ENCODE measurements at regions of chr2 and their contacts with region 1.

Region 1: GRCh38 chr2:96868555-96869280 is 1.2 kb downstream of the SEMA4C start:
- DNase-seq: peak; percentile 92
- H3K4me3 ChIP-seq: peak overlapping the region; percentile 95
- H3K4me3 Mint-ChIP-seq: peak overlapping the region; percentile 78
- H3K27ac Mint-ChIP-seq: peak overlapping the region; percentile 75
- H3K4me1 ChIP-seq: peaks cover 19% of the 10 kb centered on the region
- H3K4me1 Mint-ChIP-seq: no peaks in the 10 kb centered on the region
- H3K27me3 ChIP-seq: no peaks in the 10 kb centered on the region
- H3K27me3 Mint-ChIP-seq: no peaks in the 10 kb centered on the region
- CTCF ChIP-seq: peak; percentile 39 to 84

Region 2: DNA sequence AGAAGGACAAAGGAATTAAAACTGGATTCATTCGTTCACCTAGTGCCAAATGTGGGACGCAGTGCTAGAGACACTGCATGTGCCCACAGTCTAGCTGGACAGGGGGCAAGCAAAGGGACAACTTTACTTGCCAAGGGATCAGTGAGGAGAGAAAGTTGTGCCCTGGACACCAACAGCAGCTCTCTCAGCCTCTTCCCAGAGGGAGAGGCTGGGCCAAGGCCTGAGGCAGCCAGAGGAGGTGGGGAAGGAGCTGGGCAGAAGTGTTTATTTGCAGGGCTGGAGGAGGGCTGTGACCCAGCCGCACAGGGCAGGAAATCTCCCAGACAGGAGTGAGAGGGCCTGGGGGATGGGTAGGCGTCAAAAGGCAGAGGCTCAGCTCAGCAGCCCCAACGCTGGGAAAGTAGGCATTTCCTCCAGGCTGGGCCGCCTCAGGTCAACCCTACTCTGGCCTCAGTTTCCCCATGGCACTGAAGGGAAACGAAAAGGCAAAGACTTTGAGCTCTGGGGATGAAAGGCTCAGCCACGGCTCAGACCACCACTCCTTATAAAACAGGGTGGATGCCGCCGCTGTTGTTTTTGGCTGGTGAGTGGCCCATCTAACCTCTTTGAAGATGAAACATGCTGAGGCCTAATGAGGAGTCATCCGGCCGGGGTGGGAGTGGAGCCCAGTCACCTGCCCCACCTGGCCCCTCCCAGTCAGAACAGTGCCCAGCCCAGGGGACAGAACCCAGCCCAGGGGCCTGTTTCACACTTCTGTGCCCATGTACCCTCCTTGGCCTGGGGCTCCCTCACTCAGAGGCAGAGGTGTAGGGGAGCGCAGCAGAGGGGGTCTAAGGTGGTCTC is 23.0 kb after region 1 on chr2:
- CTCF ChIA-PET with region 1: interaction called, 14 read pairs
- POLR2A ChIA-PET with region 1: no interaction called
- intact Hi-C with region 1: no loop called
- DNase-seq: no peak
- H3K4me3 ChIP-seq: no peak overlapping the region
- H3K4me3 Mint-ChIP-seq: no peak overlapping the region
- H3K27ac Mint-ChIP-seq: no peak overlapping the region
- H3K4me1 ChIP-seq: peaks cover 38% of the 10 kb centered on the region
- H3K4me1 Mint-ChIP-seq: peaks cover 29% of the 10 kb centered on the region
- H3K27me3 ChIP-seq: no peaks in the 10 kb centered on the region
- H3K27me3 Mint-ChIP-seq: no peaks in the 10 kb centered on the region
- CTCF ChIP-seq: no peak

Region 3: DNA sequence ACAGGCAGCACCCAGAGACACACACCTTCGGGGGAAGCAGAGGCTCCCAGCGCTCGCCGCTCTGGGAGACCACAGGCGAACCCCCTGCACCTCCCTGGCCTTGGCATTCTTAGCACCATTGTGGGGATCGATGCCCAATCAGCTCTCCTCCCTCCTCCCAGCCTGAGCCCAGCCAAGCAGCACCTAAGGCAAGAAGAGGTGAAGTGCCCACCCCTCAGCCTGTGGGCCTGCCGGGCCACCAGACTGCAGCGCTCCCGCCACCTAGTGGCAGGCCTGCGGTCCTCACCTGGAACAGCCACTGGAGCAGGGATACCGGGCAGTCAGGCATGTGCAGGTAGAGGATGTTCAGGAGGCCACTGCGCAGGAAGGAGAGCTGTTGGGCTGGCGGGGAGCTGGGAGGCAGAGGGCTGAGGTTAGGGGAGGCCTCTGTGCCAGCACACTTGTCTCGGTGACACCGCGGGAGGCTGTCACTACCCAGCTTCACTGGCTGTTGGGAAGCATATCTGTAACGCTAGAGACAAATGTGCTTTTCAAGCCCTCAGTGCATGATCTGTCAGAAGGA is 82.5 kb after region 1 on chr2:
- CTCF ChIA-PET with region 1: interaction called, 10 read pairs
- POLR2A ChIA-PET with region 1: no interaction called
- intact Hi-C with region 1: no loop called
- DNase-seq: peak; percentile 85 to 92
- H3K4me3 ChIP-seq: no peak overlapping the region
- H3K4me3 Mint-ChIP-seq: no peak overlapping the region
- H3K27ac Mint-ChIP-seq: no peak overlapping the region
- H3K4me1 ChIP-seq: no peaks in the 10 kb centered on the region
- H3K4me1 Mint-ChIP-seq: no peaks in the 10 kb centered on the region
- H3K27me3 ChIP-seq: no peaks in the 10 kb centered on the region
- H3K27me3 Mint-ChIP-seq: no peaks in the 10 kb centered on the region
- CTCF ChIP-seq: peak; percentile 96 to 97

Region 4: GRCh38 chr2:97011977-97012565 is 143.4 kb after region 1 on chr2:
- CTCF ChIA-PET with region 1: no interaction called
- POLR2A ChIA-PET with region 1: no interaction called
- intact Hi-C with region 1: no loop called
- DNase-seq: peak in 1 of 2 experiments; percentile 61
- H3K4me3 ChIP-seq: no peak overlapping the region
- H3K4me3 Mint-ChIP-seq: no peak overlapping the region
- H3K27ac Mint-ChIP-seq: no peak overlapping the region
- H3K4me1 ChIP-seq: no peaks in the 10 kb centered on the region
- H3K4me1 Mint-ChIP-seq: no peaks in the 10 kb centered on the region
- H3K27me3 ChIP-seq: no peaks in the 10 kb centered on the region
- H3K27me3 Mint-ChIP-seq: peaks cover 27% of the 10 kb centered on the region
- CTCF ChIP-seq: peak; percentile 40 to 45

Measured in Caco-2 (cell line).